Posterior vena cava (tissue), 2 donors: ENCODE measurements at regions of chr17 and their contacts with region 1.

Region 1: DNA sequence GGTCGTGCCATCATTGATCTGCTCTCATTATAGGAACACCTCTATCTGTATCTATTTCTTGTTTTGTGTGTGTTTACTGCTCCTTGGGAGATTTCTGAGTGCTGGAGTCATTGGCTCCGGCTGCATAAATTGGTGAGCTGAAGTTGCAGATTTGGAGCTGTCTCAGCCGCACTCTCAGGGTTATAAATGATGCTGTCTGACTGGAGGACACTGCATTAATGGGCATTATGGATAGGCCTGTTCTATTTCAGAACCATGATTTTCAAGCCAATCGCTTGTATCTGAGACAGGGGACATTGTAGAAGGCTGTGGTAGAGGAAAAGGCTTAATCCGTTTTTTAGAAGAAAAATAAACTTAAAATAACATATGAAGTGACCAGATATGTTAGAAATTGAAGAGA is 126.4 kb upstream of the KIF2B start:
- DNase-seq: no peak

Region 2: GRCh38 chr17:53626286-53626685 is 70.0 kb before region 1 on chr17:
- intact Hi-C with region 1: no loop called
- DNase-seq: no peak

Region 3: GRCh38 chr17:53722407-53722806 is 26.1 kb after region 1 on chr17:
- intact Hi-C with region 1: loop called in 1 of 2 experiments (anchors 1 kb)
- DNase-seq: no peak

Region 4: GRCh38 chr17:53844476-53845107 is 148.3 kb after region 1 on chr17:
- intact Hi-C with region 1: no loop called
- DNase-seq: no peak